Right lobe of liver (tissue), 6 donors: ENCODE measurements at regions of chr6 and their contacts with region 1.

Region 1: GRCh38 chr6:4055420-4056041 is 23.4 kb downstream of the FAM217A start:
- DNase-seq: no peak
- ATAC-seq: peak; percentile 31 to 85 (median 64)
- H3K4me3 ChIP-seq: no peak overlapping the region
- H3K27ac ChIP-seq: no peak overlapping the region
- H3K4me1 ChIP-seq: no peaks in the 10 kb centered on the region
- H3K27me3 ChIP-seq: no peaks in the 10 kb centered on the region
- CTCF ChIP-seq: peak; percentile 39 to 51 (median 46)
- POLR2A ChIP-seq: no peak

Region 2: GRCh38 chr6:3258720-3259490 is 796.6 kb before region 1 on chr6 and contains the start of gene PSMG4:
- intact Hi-C with region 1: no loop called
- DNase-seq: peak; percentile 97 to 98 (median 98)
- ATAC-seq: peak; percentile 96 to 98 (median 98)
- H3K4me3 ChIP-seq: peak within 1 kb of the TSS; percentile 94 to 98 (median 97)
- H3K27ac ChIP-seq: peak within 1 kb of the TSS; percentile 56 to 83 (median 80)
- H3K4me1 ChIP-seq: peaks cover 0 to 20% (median 10%) of the 10 kb centered on the region in 4 donors
- H3K27me3 ChIP-seq: no peaks in the 10 kb centered on the region
- CTCF ChIP-seq: no peak
- POLR2A ChIP-seq: peak; percentile 51
- total RNA-seq, gene PSMG4: 9.4 to 15.4 (median 11.0) TPM

Region 3: GRCh38 chr6:4155848-4156466 is 100.4 kb after region 1 on chr6:
- intact Hi-C with region 1: loop called in 1 of 2 experiments (anchors 10 kb)
- DNase-seq: peak in 2 of 3 donors; percentile 54 to 76
- ATAC-seq: peak; percentile 93 to 100 (median 96)
- H3K4me3 ChIP-seq: no peak overlapping the region
- H3K27ac ChIP-seq: no peak overlapping the region
- H3K4me1 ChIP-seq: no peaks in the 10 kb centered on the region
- H3K27me3 ChIP-seq: no peaks in the 10 kb centered on the region
- CTCF ChIP-seq: peak; percentile 84 to 89 (median 88)
- POLR2A ChIP-seq: no peak

Region 4: GRCh38 chr6:4185419-4185818 is 129.9 kb after region 1 on chr6:
- intact Hi-C with region 1: no loop called
- DNase-seq: no peak
- ATAC-seq: no peak
- H3K4me3 ChIP-seq: no peak overlapping the region
- H3K27ac ChIP-seq: no peak overlapping the region
- H3K4me1 ChIP-seq: no peaks in the 10 kb centered on the region
- H3K27me3 ChIP-seq: no peaks in the 10 kb centered on the region
- CTCF ChIP-seq: no peak
- POLR2A ChIP-seq: no peak